A673 (cell line): ENCODE measurements at regions of chr3 and their contacts with region 1.

Region 1: GRCh38 chr3:83523470-83524073 is 1435.2 kb upstream of the CADM2 start:
- DNase-seq: peak; percentile 62
- H3K4me3 ChIP-seq: no peak overlapping the region
- H3K27ac ChIP-seq: no peak overlapping the region
- H3K4me1 ChIP-seq: no peaks in the 10 kb centered on the region
- H3K27me3 ChIP-seq: no peaks in the 10 kb centered on the region
- CTCF ChIP-seq: peak; percentile 60

Region 2: GRCh38 chr3:81581966-81582599 is 1941.5 kb before region 1 on chr3:
- CTCF ChIA-PET with region 1: no interaction called
- POLR2A ChIA-PET with region 1: no interaction called
- intact Hi-C with region 1: loop called (anchors 5 kb)
- DNase-seq: peak; percentile 61
- H3K4me3 ChIP-seq: no peak overlapping the region
- H3K27ac ChIP-seq: no peak overlapping the region
- H3K4me1 ChIP-seq: no peaks in the 10 kb centered on the region
- H3K27me3 ChIP-seq: no peaks in the 10 kb centered on the region
- CTCF ChIP-seq: peak; percentile 80

Region 3: GRCh38 chr3:81666493-81667121 is 1857.0 kb before region 1 on chr3:
- CTCF ChIA-PET with region 1: no interaction called
- POLR2A ChIA-PET with region 1: no interaction called
- intact Hi-C with region 1: loop called (anchors 5 kb)
- DNase-seq: peak; percentile 15
- H3K4me3 ChIP-seq: no peak overlapping the region
- H3K27ac ChIP-seq: no peak overlapping the region
- H3K4me1 ChIP-seq: no peaks in the 10 kb centered on the region
- H3K27me3 ChIP-seq: no peaks in the 10 kb centered on the region
- CTCF ChIP-seq: peak; percentile 76

Region 4: DNA sequence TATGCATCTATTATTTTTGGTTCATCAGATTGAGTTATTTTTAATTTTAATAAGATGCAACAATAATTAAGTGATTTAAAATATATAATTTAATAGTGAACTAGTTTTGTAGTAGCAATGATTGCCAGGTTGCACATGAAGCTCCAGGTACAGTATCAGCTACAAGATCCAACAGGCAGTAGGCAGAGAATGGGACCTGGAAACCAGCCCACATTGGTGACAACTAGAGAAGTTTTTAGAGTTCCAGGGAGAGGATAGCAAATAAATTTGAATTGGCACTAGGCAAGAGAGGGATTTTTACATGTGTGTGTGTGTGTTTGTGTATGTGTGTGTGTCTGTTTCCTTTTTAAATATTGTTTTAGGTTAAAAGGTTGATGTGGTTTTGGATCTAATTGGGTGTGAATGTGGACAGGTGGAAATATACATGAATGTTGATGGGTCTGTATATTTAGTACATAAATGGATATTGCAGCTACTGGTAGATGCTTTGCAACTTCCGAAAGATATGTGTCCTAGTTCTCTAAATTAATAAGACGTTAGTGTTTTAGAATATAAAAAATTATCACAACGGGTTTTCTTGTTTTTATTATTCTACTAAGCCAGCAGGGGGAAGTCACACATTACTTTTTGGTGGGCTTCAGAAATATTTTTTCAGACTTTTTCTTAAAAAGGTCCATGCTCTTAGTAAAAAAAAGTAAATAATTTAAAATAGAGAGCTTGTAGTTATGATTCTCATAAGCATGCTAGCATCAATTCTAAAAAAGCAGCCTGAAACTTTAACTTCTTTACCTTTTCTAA is 1652.0 kb before region 1 on chr3:
- CTCF ChIA-PET with region 1: no interaction called
- POLR2A ChIA-PET with region 1: no interaction called
- intact Hi-C with region 1: loop called (anchors 10 kb)
- DNase-seq: peak; percentile 5
- H3K4me3 ChIP-seq: no peak overlapping the region
- H3K27ac ChIP-seq: no peak overlapping the region
- H3K4me1 ChIP-seq: no peaks in the 10 kb centered on the region
- H3K27me3 ChIP-seq: no peaks in the 10 kb centered on the region
- CTCF ChIP-seq: peak; percentile 30; the same call in 1 of the 2 replicates

Region 5: GRCh38 chr3:82496890-82497560 is 1026.5 kb before region 1 on chr3:
- CTCF ChIA-PET with region 1: no interaction called
- POLR2A ChIA-PET with region 1: no interaction called
- intact Hi-C with region 1: loop called (anchors 5 kb)
- DNase-seq: peak; percentile 32
- H3K4me3 ChIP-seq: no peak overlapping the region
- H3K27ac ChIP-seq: no peak overlapping the region
- H3K4me1 ChIP-seq: no peaks in the 10 kb centered on the region
- H3K27me3 ChIP-seq: no peaks in the 10 kb centered on the region
- CTCF ChIP-seq: peak; percentile 62

Region 6: DNA sequence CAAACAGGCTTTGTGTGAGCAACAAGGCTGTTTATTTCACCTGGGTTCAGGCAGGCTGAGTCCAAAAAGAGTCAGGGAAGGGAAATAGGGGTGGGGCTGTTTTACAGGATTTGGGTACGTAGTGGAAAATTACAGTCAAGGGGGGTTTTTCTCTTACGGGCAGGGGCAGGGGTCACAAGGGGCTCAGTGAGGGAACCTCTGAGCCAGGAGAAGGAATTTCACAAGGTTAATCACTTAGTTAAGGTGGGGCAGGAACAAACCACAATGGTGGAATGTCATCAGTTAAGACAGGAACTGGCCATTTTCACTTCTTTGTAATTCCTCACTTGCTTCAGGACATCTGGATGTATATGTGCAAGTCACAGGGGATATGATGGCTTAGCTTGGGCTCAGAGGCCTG is 169.4 kb before region 1 on chr3:
- CTCF ChIA-PET with region 1: no interaction called
- POLR2A ChIA-PET with region 1: no interaction called
- intact Hi-C with region 1: no loop called
- DNase-seq: no peak
- H3K4me3 ChIP-seq: no peak overlapping the region
- H3K27ac ChIP-seq: no peak overlapping the region
- H3K4me1 ChIP-seq: no peaks in the 10 kb centered on the region
- H3K27me3 ChIP-seq: no peaks in the 10 kb centered on the region
- CTCF ChIP-seq: no peak

Region 7: DNA sequence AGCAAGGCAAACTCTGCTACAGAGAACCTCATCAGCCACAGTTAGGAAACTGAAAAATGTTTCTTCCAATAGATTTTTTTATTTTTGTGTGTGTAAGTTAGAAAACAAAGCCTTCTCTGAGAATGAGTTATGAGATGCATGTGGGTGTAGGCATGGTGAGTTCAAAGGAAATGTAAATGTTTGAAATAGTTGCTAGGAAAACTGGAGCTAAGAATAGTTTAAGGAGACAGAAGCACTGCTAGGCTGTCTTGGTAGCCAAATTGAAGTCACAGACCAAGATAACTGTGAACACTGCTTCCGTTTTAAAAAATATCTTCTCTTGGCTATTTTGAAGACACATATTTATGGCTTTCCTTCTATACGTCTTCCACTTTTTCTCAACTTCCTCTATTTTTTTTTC is 66.0 kb before region 1 on chr3:
- CTCF ChIA-PET with region 1: no interaction called
- POLR2A ChIA-PET with region 1: no interaction called
- intact Hi-C with region 1: no loop called
- DNase-seq: no peak
- H3K4me3 ChIP-seq: no peak overlapping the region
- H3K27ac ChIP-seq: no peak overlapping the region
- H3K4me1 ChIP-seq: no peaks in the 10 kb centered on the region
- H3K27me3 ChIP-seq: no peaks in the 10 kb centered on the region
- CTCF ChIP-seq: no peak

Region 8: GRCh38 chr3:83649692-83650091 is 126.1 kb after region 1 on chr3:
- CTCF ChIA-PET with region 1: no interaction called
- POLR2A ChIA-PET with region 1: no interaction called
- intact Hi-C with region 1: no loop called
- DNase-seq: no peak
- H3K4me3 ChIP-seq: no peak overlapping the region
- H3K27ac ChIP-seq: no peak overlapping the region
- H3K4me1 ChIP-seq: no peaks in the 10 kb centered on the region
- H3K27me3 ChIP-seq: no peaks in the 10 kb centered on the region
- CTCF ChIP-seq: no peak